CD4-positive, alpha-beta memory T cell (primary cell): ENCODE measurements at regions of chr12 and their contacts with region 1.

Region 1: DNA sequence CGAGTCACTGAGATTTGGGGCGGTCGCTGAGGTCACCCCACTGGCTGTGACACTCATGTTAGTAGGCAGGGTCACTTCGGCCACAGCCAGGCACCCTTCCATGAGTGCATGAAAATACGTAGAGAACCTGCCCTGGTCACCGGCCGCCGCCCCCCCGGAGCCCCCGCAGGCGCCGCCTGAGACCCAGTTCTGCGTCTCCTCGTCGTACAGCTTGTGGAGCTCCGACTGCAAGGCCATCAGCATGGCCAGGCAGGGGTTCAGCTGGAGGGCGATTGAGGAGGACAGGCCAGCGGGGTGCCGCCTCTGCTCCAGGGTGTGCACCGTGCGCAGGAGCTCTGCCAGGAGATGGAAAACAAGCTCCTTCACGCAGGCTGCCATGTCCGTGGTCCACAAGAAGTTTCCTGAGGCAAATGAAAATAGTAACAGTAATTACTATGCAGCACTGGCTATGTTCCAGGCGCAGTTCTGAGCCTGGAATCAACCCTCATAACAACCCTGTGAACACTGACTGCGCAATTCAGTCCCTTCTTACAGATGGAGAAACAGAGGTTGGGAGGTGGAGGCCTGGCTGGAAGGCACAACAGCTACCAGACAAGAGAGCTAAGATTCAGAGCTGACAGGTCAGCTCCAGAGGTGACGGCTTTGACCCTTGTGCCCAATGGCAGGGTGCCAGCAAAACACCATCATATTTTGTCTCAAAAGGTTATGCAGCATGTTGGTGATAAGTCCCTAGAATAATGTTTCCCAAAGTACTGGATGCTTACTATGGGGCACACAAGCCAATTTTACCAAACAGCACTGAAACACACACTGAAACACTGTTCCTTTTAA is 59.9 kb downstream of the TRAFD1 start:
- DNase-seq: no peak
- H3K4me3 ChIP-seq: no peak overlapping the region
- H3K4me3 Mint-ChIP-seq: no peak overlapping the region
- H3K27ac ChIP-seq: no peak overlapping the region
- H3K27ac Mint-ChIP-seq: peak overlapping the region in 2 of 7 donors; percentile 13 to 48
- H3K4me1 ChIP-seq: no peaks in the 10 kb centered on the region
- H3K4me1 Mint-ChIP-seq: no peaks in the 10 kb centered on the region
- H3K27me3 ChIP-seq: no peaks in the 10 kb centered on the region
- H3K27me3 Mint-ChIP-seq: no peaks in the 10 kb centered on the region

Region 2: DNA sequence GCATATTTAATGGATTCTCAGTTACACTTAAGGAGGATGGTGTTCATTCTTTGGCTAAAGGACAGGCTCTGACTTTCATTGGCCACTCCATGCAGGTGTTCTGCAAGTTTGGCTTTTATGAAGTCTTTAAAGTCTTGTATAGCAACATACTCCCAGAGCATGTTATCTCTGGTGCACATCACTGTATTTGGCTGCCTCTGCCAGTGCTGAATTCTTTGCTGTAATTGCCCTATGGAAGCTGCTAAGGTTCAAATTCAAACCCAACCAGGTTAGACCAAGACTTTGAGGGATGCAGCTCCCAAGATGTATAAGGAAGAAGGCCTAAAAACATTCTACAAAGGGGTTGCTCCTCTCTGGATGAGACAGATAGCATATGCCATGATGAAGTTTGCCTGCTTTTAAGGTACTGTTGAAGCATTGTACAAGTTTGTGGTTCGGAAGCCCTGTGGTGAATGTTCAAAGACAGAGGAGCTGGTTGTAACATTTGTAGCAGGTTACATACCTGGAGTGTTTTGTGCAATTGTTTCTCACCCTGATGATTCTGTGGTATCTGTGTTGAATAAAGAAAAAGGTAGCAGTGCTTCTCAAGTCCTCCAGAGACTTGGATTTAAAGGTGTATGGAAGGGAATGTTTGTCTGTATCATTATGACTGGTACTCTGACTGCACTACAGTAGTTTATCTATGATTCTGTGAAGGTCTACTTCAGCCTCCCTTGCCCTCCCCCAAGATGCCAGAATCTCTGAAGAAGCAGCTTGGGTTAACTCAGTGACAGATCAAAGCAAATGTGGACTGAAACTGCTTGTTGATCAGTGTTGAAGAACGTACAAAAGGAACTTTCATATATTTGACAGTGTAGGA is 191.8 kb before region 1 on chr12:
- CTCF ChIA-PET with region 1: no interaction called
- POLR2A ChIA-PET with region 1: no interaction called
- intact Hi-C with region 1: no loop called
- DNase-seq: peak; percentile 63 to 71 (median 67)
- H3K4me3 ChIP-seq: peak overlapping the region in 1 of 2 donors; percentile 55
- H3K4me3 Mint-ChIP-seq: peak overlapping the region; percentile 87 to 96 (median 92)
- H3K27ac ChIP-seq: peak overlapping the region; percentile 52
- H3K27ac Mint-ChIP-seq: peak overlapping the region; percentile 80 to 97 (median 92)
- H3K4me1 ChIP-seq: peaks cover 83% of the 10 kb centered on the region
- H3K4me1 Mint-ChIP-seq: peaks cover 50 to 88% (median 66%) of the 10 kb centered on the region in 4 donors
- H3K27me3 ChIP-seq: no peaks in the 10 kb centered on the region
- H3K27me3 Mint-ChIP-seq: no peaks in the 10 kb centered on the region

Region 3: DNA sequence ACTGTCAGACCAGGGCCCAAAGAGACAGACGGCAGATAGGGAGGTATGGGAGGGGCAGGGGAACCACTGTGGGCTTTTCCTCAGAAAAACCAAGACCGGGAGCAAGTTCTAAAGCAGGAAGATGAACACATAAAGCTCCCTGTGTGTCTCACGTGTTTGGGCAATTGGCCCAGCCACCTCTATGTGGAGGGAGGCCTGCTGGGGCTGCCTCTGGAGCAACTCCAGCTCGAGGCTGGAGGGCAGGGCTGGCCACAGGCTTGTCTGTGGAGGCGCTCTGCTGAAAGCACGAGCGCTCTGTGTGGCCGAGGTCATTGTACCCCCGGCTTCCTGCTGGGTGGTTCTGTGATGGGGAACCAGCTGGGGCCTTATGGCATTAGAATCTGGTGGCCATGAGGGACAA is 23.6 kb before region 1 on chr12:
- CTCF ChIA-PET with region 1: no interaction called
- POLR2A ChIA-PET with region 1: no interaction called
- intact Hi-C with region 1: no loop called
- DNase-seq: no peak
- H3K4me3 ChIP-seq: no peak overlapping the region
- H3K4me3 Mint-ChIP-seq: no peak overlapping the region
- H3K27ac ChIP-seq: no peak overlapping the region
- H3K27ac Mint-ChIP-seq: peak overlapping the region in 6 of 7 donors; percentile 44 to 86 (median 56)
- H3K4me1 ChIP-seq: peaks cover 22% of the 10 kb centered on the region
- H3K4me1 Mint-ChIP-seq: peaks cover 18 to 38% (median 31%) of the 10 kb centered on the region in 4 donors
- H3K27me3 ChIP-seq: no peaks in the 10 kb centered on the region
- H3K27me3 Mint-ChIP-seq: no peaks in the 10 kb centered on the region

Region 4: GRCh38 chr12:112198120-112198733 is 12.9 kb after region 1 on chr12:
- CTCF ChIA-PET with region 1: interaction called, 11 read pairs
- POLR2A ChIA-PET with region 1: interaction called, 3 read pairs
- intact Hi-C with region 1: no loop called
- DNase-seq: peak in 4 of 5 donors; percentile 21 to 32 (median 26)
- H3K4me3 ChIP-seq: no peak overlapping the region
- H3K4me3 Mint-ChIP-seq: no peak overlapping the region
- H3K27ac ChIP-seq: no peak overlapping the region
- H3K27ac Mint-ChIP-seq: peak overlapping the region in 2 of 7 donors; percentile 28 to 52
- H3K4me1 ChIP-seq: no peaks in the 10 kb centered on the region
- H3K4me1 Mint-ChIP-seq: peaks cover 0 to 3% (median under 1%) of the 10 kb centered on the region in 4 donors
- H3K27me3 ChIP-seq: no peaks in the 10 kb centered on the region
- H3K27me3 Mint-ChIP-seq: no peaks in the 10 kb centered on the region

Region 5: DNA sequence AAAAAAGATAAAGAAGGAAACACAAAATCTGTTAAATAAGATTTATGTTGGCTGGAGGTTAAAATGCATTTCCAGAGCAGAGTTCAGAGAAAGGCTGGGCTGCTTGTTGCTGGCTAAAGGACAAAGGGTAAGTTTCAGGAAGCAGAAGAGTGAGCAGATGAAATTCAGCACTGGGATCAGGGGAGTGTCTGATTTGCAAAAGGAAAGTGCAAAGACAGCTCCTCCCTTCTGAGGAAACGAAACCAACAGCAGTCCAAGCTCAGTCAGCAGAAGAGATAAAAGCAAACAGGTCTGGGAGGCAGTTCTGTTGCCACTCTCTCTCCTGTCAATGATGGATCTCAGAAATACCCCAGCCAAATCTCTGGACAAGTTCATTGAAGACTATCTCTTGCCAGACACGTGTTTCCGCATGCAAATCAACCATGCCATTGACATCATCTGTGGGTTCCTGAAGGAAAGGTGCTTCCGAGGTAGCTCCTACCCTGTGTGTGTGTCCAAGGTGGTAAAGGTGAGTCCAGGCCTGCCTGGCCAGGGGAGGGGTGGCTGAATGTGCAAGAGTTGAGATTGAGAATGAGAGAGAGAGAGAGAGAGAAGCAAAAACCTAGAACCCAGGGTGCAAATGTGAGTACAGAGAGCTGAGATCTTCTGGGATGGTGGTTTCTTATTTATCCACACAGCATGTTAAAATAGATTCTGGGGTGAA is 721.6 kb after region 1 on chr12 and contains the start of gene OAS1:
- CTCF ChIA-PET with region 1: no interaction called
- POLR2A ChIA-PET with region 1: no interaction called
- intact Hi-C with region 1: no loop called
- DNase-seq: peak; percentile 40 to 58 (median 47)
- H3K4me3 ChIP-seq: peak within 1 kb of the TSS; percentile 69 to 79
- H3K4me3 Mint-ChIP-seq: peak within 1 kb of the TSS; percentile 89 to 98 (median 96)
- H3K27ac ChIP-seq: peak within 1 kb of the TSS; percentile 68
- H3K27ac Mint-ChIP-seq: peak within 1 kb of the TSS; percentile 86 to 97 (median 94)
- H3K4me1 ChIP-seq: peaks cover 79% of the 10 kb centered on the region
- H3K4me1 Mint-ChIP-seq: peaks cover 52 to 91% (median 72%) of the 10 kb centered on the region in 4 donors
- H3K27me3 ChIP-seq: no peaks in the 10 kb centered on the region
- H3K27me3 Mint-ChIP-seq: no peaks in the 10 kb centered on the region
- total RNA-seq, gene OAS1: 8.4 to 10.9 TPM